CD14-positive monocyte (primary cell): ENCODE measurements at regions of chr6 and their contacts with region 1.

Region 1: DNA sequence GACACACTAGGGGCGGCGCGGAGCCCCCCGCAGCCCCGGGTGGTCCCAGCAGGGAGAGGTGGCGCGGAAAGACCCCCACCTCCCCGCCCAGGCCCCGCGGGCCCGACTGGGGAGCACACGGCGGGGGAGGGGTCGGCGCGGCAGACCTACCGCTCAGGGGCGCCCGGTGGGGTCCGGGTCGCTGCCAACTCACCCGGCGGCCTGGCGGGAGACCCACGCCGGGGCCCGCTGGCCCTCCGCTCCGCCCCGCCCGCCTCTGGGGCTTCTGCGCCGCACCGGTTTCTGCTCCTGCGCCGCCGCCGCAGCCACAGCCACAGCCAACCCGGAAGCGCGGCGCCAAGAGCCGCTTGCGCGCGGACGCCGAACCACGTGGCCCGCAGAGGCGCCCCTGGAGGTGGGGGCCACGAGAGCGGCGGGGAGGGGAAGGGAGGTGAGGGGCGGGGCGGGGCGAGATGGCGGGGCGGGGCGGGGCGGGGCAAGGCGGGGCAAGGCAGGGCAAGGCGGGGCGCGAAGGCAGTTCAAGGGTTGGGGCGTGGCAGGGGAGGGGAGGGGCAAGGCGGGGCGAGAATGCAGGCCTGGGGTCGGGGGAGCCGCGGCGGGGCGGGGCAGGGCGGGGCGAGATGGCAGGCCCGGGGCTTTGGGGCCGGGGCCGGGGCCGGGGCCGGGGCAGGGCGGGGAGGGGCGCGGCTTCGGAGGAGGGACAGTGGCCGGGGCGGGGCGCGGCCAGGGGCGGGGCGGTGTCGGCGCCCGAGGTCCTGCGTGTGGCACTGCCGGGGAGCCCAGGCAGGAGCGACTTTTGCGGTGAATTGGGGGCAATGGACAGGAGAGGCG is at the start of gene ZBTB24:
- DNase-seq: peak; percentile 89 to 94 (median 90)
- H3K4me3 ChIP-seq: peak within 1 kb of the TSS; percentile 49 to 96 (median 94)
- H3K4me3 Mint-ChIP-seq: peak within 1 kb of the TSS; percentile 79 to 92
- H3K27ac ChIP-seq: peak within 1 kb of the TSS; percentile 12 to 91
- H3K27ac Mint-ChIP-seq: peak within 1 kb of the TSS; percentile 83 to 89 (median 88)
- H3K4me1 ChIP-seq: peaks cover 35 to 47% of the 10 kb centered on the region in 2 donors
- H3K4me1 Mint-ChIP-seq: peaks cover 44% of the 10 kb centered on the region
- H3K27me3 ChIP-seq: no peaks in the 10 kb centered on the region
- H3K27me3 Mint-ChIP-seq: peaks cover 1 to 9% (median 4%) of the 10 kb centered on the region in 3 donors
- CTCF ChIP-seq: no peak
- polyA plus RNA-seq, gene ZBTB24: 3.1 to 4.7 (median 3.4) TPM

Region 2: GRCh38 chr6:109284675-109285074 is 198.4 kb before region 1 on chr6:
- intact Hi-C with region 1: no loop called
- DNase-seq: no peak
- H3K4me3 ChIP-seq: no peak overlapping the region
- H3K4me3 Mint-ChIP-seq: no peak overlapping the region
- H3K27ac ChIP-seq: no peak overlapping the region
- H3K27ac Mint-ChIP-seq: no peak overlapping the region
- H3K4me1 ChIP-seq: peaks cover 13 to 14% of the 10 kb centered on the region in 2 donors
- H3K4me1 Mint-ChIP-seq: peaks cover 24% of the 10 kb centered on the region
- H3K27me3 ChIP-seq: no peaks in the 10 kb centered on the region
- H3K27me3 Mint-ChIP-seq: peaks cover 0 to 6% (median 0%) of the 10 kb centered on the region in 3 donors
- CTCF ChIP-seq: no peak

Region 3: GRCh38 chr6:109440331-109441068 is 42.6 kb before region 1 on chr6 and contains the starts of genes PPIL6 and SMPD2:
- intact Hi-C with region 1: loop called (anchors 5 kb)
- DNase-seq: peak; percentile 73 to 84 (median 81)
- H3K4me3 ChIP-seq: peak within 1 kb of the TSS; percentile 52 to 87 (median 71)
- H3K4me3 Mint-ChIP-seq: peak within 1 kb of the TSS; percentile 96
- H3K27ac ChIP-seq: peak within 1 kb of the TSS; percentile 53 to 85
- H3K27ac Mint-ChIP-seq: peak within 1 kb of the TSS; percentile 87 to 97 (median 92)
- H3K4me1 ChIP-seq: peaks cover 20 to 32% of the 10 kb centered on the region in 2 donors
- H3K4me1 Mint-ChIP-seq: peaks cover 34% of the 10 kb centered on the region
- H3K27me3 ChIP-seq: peaks cover 0 to 4% of the 10 kb centered on the region in 2 donors
- H3K27me3 Mint-ChIP-seq: peaks cover 1 to 9% (median 4%) of the 10 kb centered on the region in 3 donors
- CTCF ChIP-seq: peak; percentile 25
- polyA plus RNA-seq, gene PPIL6: 0.09 to 0.28 (median 0.14) TPM
- polyA plus RNA-seq, gene SMPD2: 9.5 to 14.3 (median 12.3) TPM

Region 4: GRCh38 chr6:109455502-109456282 is 27.4 kb before region 1 on chr6 and contains the start of gene MICAL1:
- intact Hi-C with region 1: loop called in 1 of 2 experiments (anchors 2 kb)
- DNase-seq: peak; percentile 72 to 78 (median 77)
- H3K4me3 ChIP-seq: peak within 1 kb of the TSS; percentile 51 to 97 (median 78)
- H3K4me3 Mint-ChIP-seq: peak within 1 kb of the TSS; percentile 96 to 98
- H3K27ac ChIP-seq: peak within 1 kb of the TSS; percentile 84 to 93
- H3K27ac Mint-ChIP-seq: peak within 1 kb of the TSS; percentile 88 to 99 (median 97)
- H3K4me1 ChIP-seq: peaks cover 49 to 57% of the 10 kb centered on the region in 2 donors
- H3K4me1 Mint-ChIP-seq: peaks cover 51% of the 10 kb centered on the region
- H3K27me3 ChIP-seq: no peaks in the 10 kb centered on the region
- H3K27me3 Mint-ChIP-seq: no peaks in the 10 kb centered on the region
- CTCF ChIP-seq: peak; percentile 35
- polyA plus RNA-seq, gene MICAL1: 7.5 to 227 (median 13.2) TPM